T-cell (primary cell): ENCODE measurements at regions of chr13 and their contacts with region 1.

Region 1: DNA sequence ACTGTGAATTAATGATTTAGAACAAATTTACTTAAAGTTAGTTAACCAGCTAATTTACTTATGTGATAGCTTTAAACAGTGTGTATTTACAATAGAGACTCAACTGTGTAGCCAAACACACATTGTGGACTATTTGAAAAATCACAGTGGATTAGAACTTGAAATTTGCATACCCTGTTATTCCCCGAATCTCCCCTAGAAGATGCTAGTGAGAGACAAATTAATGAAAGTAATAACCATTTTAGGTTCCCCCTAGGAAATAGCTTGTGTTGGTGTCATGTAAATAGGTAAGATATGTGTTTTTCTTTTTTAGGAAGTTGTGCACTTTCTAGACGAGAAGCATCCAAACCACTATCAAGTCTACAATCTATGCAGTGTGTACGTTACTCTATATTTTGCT is 98.5 kb downstream of the C1QTNF9 start:
- DNase-seq: peak in 1 of 35 experiments; percentile 2
- ATAC-seq: no peak
- H3K4me3 ChIP-seq: no peak overlapping the region
- H3K4me3 Mint-ChIP-seq: no peak overlapping the region
- H3K27ac ChIP-seq: no peak overlapping the region
- H3K27ac Mint-ChIP-seq: no peak overlapping the region
- H3K4me1 ChIP-seq: no peaks in the 10 kb centered on the region
- H3K4me1 Mint-ChIP-seq: peaks cover 0 to 7% (median 3%) of the 10 kb centered on the region in 3 donors
- H3K27me3 ChIP-seq: no peaks in the 10 kb centered on the region
- H3K27me3 Mint-ChIP-seq: peaks cover 4 to 5% of the 10 kb centered on the region in 2 donors

Region 2: DNA sequence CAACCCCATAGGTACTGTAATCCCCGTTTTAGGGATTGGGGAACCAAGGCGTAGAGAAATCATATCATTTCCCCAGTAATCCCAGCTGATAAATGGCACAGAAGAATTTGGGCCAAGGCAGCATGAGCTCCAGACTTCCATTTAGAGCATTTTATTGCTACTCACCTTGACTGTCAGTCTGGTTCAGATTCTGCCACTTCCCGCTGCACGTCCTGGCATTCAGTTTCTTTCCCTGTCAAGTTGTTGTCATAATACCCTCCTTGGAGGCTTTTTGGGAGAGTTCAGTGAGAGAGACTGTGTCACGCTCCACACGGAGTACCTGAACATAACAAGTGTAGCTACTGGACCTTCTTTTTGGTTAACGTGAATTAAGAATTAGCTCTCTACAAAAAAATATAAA is 105.9 kb before region 1 on chr13:
- CTCF ChIA-PET with region 1: no interaction called
- POLR2A ChIA-PET with region 1: interaction called in 1 of 2 experiments, 11 read pairs
- DNase-seq: no peak
- ATAC-seq: no peak
- H3K4me3 ChIP-seq: no peak overlapping the region
- H3K4me3 Mint-ChIP-seq: no peak overlapping the region
- H3K27ac ChIP-seq: no peak overlapping the region
- H3K27ac Mint-ChIP-seq: no peak overlapping the region
- H3K4me1 ChIP-seq: no peaks in the 10 kb centered on the region
- H3K4me1 Mint-ChIP-seq: peaks cover 0 to 2% (median 0%) of the 10 kb centered on the region in 3 donors
- H3K27me3 ChIP-seq: no peaks in the 10 kb centered on the region
- H3K27me3 Mint-ChIP-seq: no peaks in the 10 kb centered on the region

Region 3: DNA sequence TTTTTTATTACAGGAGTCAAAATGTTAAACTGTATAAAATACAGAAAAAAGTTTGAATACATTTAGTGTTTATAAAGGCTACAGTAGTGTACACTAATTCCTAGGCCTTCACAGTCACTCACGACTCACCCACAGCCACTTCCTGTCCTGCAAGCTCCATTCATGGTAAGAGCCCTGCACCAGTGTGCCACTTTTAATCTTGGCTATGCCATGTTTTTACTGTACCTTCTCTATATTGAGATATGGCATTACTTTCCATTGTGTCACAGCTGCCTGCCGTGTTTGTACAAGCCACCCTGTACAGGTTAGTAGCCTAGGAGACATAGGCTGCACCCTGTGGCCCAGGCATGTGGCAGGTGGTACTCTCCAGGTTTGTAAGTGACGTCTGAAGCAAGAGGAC is 66.4 kb before region 1 on chr13:
- CTCF ChIA-PET with region 1: no interaction called
- POLR2A ChIA-PET with region 1: no interaction called
- DNase-seq: no peak
- ATAC-seq: no peak
- H3K4me3 ChIP-seq: no peak overlapping the region
- H3K4me3 Mint-ChIP-seq: no peak overlapping the region
- H3K27ac ChIP-seq: no peak overlapping the region
- H3K27ac Mint-ChIP-seq: no peak overlapping the region
- H3K4me1 ChIP-seq: no peaks in the 10 kb centered on the region
- H3K4me1 Mint-ChIP-seq: peaks cover 0 to 6% (median 0%) of the 10 kb centered on the region in 3 donors
- H3K27me3 ChIP-seq: peaks cover 0 to 12% of the 10 kb centered on the region in 2 experiments
- H3K27me3 Mint-ChIP-seq: peaks cover 5% of the 10 kb centered on the region in 2 donors